ENCODE measurements at regions of chr6 and their contacts with region 1.

Region 1: DNA sequence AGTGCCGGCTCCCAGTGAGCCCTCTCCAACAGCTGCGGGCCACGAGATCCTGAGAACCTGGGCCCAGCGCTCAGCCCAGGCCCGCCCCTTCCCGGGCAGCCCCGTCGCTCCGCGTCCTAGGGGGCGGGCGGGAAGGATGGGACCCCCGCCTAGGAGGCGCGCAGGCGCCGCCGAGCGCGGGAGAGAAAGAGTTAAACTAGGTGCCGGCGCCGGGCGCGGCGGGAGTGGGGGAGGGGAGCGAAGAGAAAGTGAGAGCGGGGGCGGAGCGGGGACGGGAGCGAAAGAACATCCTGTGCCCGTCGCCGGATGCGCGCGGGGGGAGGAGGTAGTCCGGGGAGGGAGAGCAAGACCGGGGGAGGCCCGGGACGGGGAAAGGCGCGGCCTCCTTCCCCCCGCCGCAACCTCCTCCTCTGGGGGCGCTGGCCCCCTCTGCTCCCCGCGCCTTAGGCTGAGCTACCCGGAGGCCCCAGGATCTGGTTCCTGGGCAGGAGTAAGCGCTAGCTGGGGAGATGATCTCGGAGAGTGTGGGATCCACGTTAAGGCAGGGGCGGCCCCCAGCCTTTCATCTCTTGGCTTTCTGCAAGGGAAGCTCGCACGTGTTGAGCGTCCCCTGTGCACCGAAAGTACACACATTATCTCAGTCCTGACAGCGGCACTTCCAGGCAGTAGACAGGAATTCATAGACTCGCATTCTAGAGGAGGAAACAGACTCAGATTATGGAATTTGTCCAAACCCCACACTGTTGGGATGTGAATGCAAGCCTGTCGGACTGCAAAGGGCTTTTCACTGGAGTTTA is 4.9 kb upstream of the ARMC12 start:
- DNase-seq: peak; percentile 93 to 96 (median 94)
- H3K4me3 ChIP-seq: peak overlapping the region; percentile 30 to 85
- H3K4me3 Mint-ChIP-seq: peak overlapping the region; percentile 83 to 93 (median 88)
- H3K27ac ChIP-seq: peak overlapping the region; percentile 92
- H3K27ac Mint-ChIP-seq: peak overlapping the region; percentile 87 to 99 (median 96)
- H3K4me1 ChIP-seq: peaks cover 89% of the 10 kb centered on the region
- H3K4me1 Mint-ChIP-seq: peaks cover 50 to 92% (median 73%) of the 10 kb centered on the region in 4 donors
- H3K27me3 ChIP-seq: no peaks in the 10 kb centered on the region
- H3K27me3 Mint-ChIP-seq: no peaks in the 10 kb centered on the region

Region 2: GRCh38 chr6:35342258-35343091 is 389.5 kb before region 1 on chr6 and contains the start of gene PPARD:
- CTCF ChIA-PET with region 1: interaction called, 4 read pairs
- POLR2A ChIA-PET with region 1: no interaction called
- intact Hi-C with region 1: loop called (anchors 2 kb)
- DNase-seq: peak; percentile 94 to 98 (median 95)
- H3K4me3 ChIP-seq: peak within 1 kb of the TSS; percentile 50 to 97
- H3K4me3 Mint-ChIP-seq: peak within 1 kb of the TSS; percentile 87 to 99 (median 96)
- H3K27ac ChIP-seq: peak within 1 kb of the TSS; percentile 86
- H3K27ac Mint-ChIP-seq: peak within 1 kb of the TSS; percentile 87 to 99 (median 96)
- H3K4me1 ChIP-seq: peaks cover 52% of the 10 kb centered on the region
- H3K4me1 Mint-ChIP-seq: peaks cover 37 to 60% (median 51%) of the 10 kb centered on the region in 4 donors
- H3K27me3 ChIP-seq: no peaks in the 10 kb centered on the region
- H3K27me3 Mint-ChIP-seq: no peaks in the 10 kb centered on the region
- total RNA-seq, gene PPARD: 37.2 to 38.7 TPM

Region 3: GRCh38 chr6:35569011-35569461 is 162.9 kb before region 1 on chr6:
- CTCF ChIA-PET with region 1: interaction called, 22 read pairs
- POLR2A ChIA-PET with region 1: no interaction called
- intact Hi-C with region 1: no loop called
- DNase-seq: peak in 4 of 5 donors; percentile 18 to 33 (median 24)
- H3K4me3 ChIP-seq: no peak overlapping the region
- H3K4me3 Mint-ChIP-seq: no peak overlapping the region
- H3K27ac ChIP-seq: no peak overlapping the region
- H3K27ac Mint-ChIP-seq: peak overlapping the region in 1 of 7 donors; percentile 72
- H3K4me1 ChIP-seq: no peaks in the 10 kb centered on the region
- H3K4me1 Mint-ChIP-seq: peaks cover 0 to 8% (median 4%) of the 10 kb centered on the region in 4 donors
- H3K27me3 ChIP-seq: no peaks in the 10 kb centered on the region
- H3K27me3 Mint-ChIP-seq: peaks cover 3 to 4% of the 10 kb centered on the region in 2 donors

Region 4: DNA sequence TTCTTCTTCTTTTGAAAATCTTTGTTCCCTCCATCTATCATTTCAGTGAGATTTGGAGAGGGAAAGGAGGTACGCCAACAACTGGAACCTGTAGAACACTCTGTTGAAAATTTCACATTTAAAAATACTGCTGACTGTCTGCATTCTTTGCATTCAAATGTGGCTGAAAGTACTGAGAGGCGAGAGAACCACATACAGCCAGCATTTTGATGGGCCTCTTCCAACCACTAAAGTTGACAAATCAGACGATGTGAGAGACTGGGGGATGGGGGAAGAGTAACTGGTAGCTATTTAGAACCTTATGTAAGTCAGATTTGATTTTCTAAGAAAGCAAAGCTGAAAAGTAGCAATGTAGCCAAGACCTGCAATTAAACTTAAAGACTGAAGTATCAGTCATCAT is 120.7 kb before region 1 on chr6:
- CTCF ChIA-PET with region 1: interaction called, 360 read pairs
- POLR2A ChIA-PET with region 1: interaction called, 151 read pairs
- intact Hi-C with region 1: no loop called
- DNase-seq: peak; percentile 36 to 46 (median 43)
- H3K4me3 ChIP-seq: no peak overlapping the region
- H3K4me3 Mint-ChIP-seq: peak overlapping the region in 7 of 8 donors; percentile 13 to 80 (median 63)
- H3K27ac ChIP-seq: peak overlapping the region; percentile 8
- H3K27ac Mint-ChIP-seq: peak overlapping the region; percentile 67 to 93 (median 80)
- H3K4me1 ChIP-seq: peaks cover 46% of the 10 kb centered on the region
- H3K4me1 Mint-ChIP-seq: peaks cover 43 to 88% (median 59%) of the 10 kb centered on the region in 4 donors
- H3K27me3 ChIP-seq: no peaks in the 10 kb centered on the region
- H3K27me3 Mint-ChIP-seq: no peaks in the 10 kb centered on the region

Region 5: GRCh38 chr6:35663447-35664235 is 68.3 kb before region 1 on chr6:
- CTCF ChIA-PET with region 1: interaction called, 19 read pairs
- POLR2A ChIA-PET with region 1: interaction called, 40 read pairs
- intact Hi-C with region 1: no loop called
- DNase-seq: no peak
- H3K4me3 ChIP-seq: peak overlapping the region in 1 of 2 donors; percentile 6
- H3K4me3 Mint-ChIP-seq: no peak overlapping the region
- H3K27ac ChIP-seq: peak overlapping the region; percentile 50
- H3K27ac Mint-ChIP-seq: no peak overlapping the region
- H3K4me1 ChIP-seq: peaks cover 66% of the 10 kb centered on the region
- H3K4me1 Mint-ChIP-seq: peaks cover 12 to 20% (median 17%) of the 10 kb centered on the region in 4 donors
- H3K27me3 ChIP-seq: no peaks in the 10 kb centered on the region
- H3K27me3 Mint-ChIP-seq: no peaks in the 10 kb centered on the region

Region 6: DNA sequence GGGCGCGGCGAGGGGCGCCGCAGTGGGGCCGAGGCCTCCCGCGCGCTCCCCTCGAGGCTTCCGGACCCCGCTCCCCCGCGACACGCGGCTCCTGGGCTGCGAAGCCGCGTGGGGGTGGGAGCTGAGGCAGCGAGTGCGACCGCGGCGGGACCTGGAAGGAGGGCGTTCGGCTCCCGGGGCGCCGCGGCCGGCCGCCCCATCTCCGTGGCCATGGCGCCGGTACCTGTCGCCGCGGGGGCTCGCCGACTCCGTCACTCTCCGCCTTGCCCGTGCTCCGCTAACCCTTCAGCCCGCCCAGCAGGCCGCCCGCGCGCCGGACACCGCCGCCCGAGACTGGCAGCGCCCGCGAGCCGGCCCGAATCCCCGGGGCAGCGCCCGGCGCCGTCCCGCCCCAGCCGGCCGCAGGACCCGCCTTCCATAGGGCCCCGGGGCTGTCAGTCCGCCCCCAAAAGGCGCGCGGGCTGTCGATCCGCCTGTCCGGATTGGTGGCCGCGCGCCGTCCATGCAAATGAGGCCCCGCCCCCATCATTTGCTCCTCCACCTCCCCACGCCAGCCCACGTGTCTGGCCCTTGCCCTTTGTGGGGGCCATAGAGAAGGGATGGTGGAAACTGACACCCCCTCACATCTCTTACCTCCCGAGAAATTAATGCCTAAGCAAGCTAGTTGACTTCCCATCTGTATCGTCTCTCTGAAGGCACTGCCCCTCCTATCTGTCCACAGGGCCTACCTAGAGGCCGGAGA is 43.2 kb before region 1 on chr6 and contains the start of gene FKBP5:
- CTCF ChIA-PET with region 1: interaction called, 33 read pairs
- POLR2A ChIA-PET with region 1: interaction called, 141 read pairs
- intact Hi-C with region 1: loop called (anchors 1 kb)
- DNase-seq: peak; percentile 83 to 87 (median 85)
- H3K4me3 ChIP-seq: peak within 1 kb of the TSS; percentile 51 to 99
- H3K4me3 Mint-ChIP-seq: peak within 1 kb of the TSS; percentile 96 to 100 (median 100)
- H3K27ac ChIP-seq: peak within 1 kb of the TSS; percentile 85
- H3K27ac Mint-ChIP-seq: peak within 1 kb of the TSS; percentile 93 to 98 (median 95)
- H3K4me1 ChIP-seq: peaks cover 22% of the 10 kb centered on the region
- H3K4me1 Mint-ChIP-seq: peaks cover 4 to 30% (median 10%) of the 10 kb centered on the region in 4 donors
- H3K27me3 ChIP-seq: no peaks in the 10 kb centered on the region
- H3K27me3 Mint-ChIP-seq: no peaks in the 10 kb centered on the region
- total RNA-seq, gene FKBP5: 72.9 to 74.2 TPM